Calu3 (cell line): ENCODE measurements at regions of chr5 and their contacts with region 1.

Region 1: DNA sequence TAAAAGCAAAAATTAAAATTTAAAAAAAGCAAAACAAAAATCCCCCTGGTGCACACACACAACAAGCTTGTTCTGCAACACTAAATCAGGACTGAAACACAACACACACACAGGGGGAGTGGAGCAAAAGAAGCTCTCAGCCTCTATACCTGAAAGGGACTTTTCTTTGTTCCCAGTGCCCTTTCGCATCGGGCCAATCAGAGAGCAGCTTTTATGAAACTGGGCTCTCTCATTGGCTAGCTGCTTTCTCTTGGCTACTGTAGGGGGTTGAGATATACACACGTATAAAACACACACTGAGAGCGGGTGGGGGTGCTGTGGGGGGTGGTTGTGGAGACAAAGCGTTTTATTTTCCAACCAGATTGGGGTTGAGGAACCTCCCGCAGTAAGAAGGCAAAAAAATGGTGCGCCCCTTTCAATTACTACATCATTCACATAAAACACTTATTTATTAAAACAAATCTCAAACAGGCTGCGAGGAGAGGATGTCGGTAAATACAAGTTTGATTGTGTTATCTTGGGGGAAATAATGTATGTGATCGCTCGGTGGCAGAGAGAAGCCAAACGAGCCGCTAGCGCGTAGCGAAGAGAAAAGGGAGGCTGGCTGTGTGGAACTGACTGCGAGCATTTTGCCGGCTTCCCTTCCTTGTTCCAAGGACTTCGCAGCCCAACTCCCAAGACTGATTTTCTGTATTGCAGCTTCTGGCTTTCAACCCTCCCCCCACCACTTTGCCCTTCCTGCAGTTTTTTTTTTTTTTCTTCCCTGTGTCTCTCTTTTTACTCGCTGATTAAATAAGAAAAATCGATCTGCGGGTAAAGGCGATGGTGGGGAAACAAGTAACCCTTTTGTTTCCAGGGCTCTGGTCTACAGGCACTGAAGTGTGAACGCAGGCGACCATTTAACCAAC is 2.5 kb upstream of the ZNF608 start:
- DNase-seq: peak; percentile 83
- H3K4me3 Mint-ChIP-seq: peak overlapping the region; percentile 80
- H3K27ac Mint-ChIP-seq: peak overlapping the region; percentile 96
- H3K4me1 Mint-ChIP-seq: peaks cover 26% of the 10 kb centered on the region
- H3K27me3 Mint-ChIP-seq: no peaks in the 10 kb centered on the region
- CTCF ChIP-seq: no peak

Region 2: DNA sequence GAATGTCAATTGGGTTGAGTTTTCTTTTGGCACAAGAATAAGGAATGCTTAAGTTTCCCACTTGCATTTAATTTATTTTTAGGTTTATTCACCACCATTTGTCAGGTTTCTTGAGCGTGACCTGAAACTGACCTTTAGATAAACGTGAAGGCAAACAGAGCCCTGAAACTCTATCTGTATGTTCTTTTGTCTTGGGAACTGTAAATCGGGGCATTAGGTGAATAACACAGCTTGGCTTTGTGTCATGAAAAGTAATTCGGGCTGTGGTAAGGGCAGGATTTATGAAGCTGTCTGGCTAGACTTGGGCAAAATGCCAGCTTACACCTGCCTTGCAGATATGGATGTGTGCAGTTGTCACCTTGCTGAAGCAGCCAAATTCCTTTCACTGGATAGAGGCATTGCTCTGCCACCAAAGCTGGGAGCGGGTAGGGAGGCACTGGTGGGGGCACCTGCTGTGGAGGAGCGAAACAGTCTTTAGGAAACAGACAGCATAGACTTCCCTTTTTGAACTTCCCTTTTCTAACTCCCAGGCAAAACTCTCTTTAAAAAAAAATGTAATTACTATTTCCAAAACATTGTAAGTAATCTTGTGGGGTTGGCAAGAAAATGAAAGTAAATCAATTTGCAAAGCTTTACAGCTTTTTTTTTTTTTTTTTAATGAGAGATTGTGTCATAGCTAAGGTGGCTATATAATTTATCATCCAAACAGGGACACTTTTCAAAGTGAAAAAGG is 691.8 kb before region 1 on chr5:
- CTCF ChIA-PET with region 1: no interaction called
- intact Hi-C with region 1: loop called (anchors 5 kb)
- DNase-seq: peak; percentile 77
- H3K4me3 Mint-ChIP-seq: peak overlapping the region; percentile 64
- H3K27ac Mint-ChIP-seq: peak overlapping the region; percentile 81
- H3K4me1 Mint-ChIP-seq: peaks cover 42% of the 10 kb centered on the region
- H3K27me3 Mint-ChIP-seq: no peaks in the 10 kb centered on the region
- CTCF ChIP-seq: no peak

Region 3: GRCh38 chr5:124764992-124765611 is 16.2 kb after region 1 on chr5:
- CTCF ChIA-PET with region 1: no interaction called
- intact Hi-C with region 1: no loop called
- DNase-seq: no peak
- H3K4me3 Mint-ChIP-seq: no peak overlapping the region
- H3K27ac Mint-ChIP-seq: no peak overlapping the region
- H3K4me1 Mint-ChIP-seq: no peaks in the 10 kb centered on the region
- H3K27me3 Mint-ChIP-seq: no peaks in the 10 kb centered on the region
- CTCF ChIP-seq: no peak

Region 4: GRCh38 chr5:124790895-124791732 is 42.2 kb after region 1 on chr5:
- CTCF ChIA-PET with region 1: interaction called, 9 read pairs
- intact Hi-C with region 1: loop called (anchors 2 kb)
- DNase-seq: no peak
- H3K4me3 Mint-ChIP-seq: no peak overlapping the region
- H3K27ac Mint-ChIP-seq: peak overlapping the region; percentile 80
- H3K4me1 Mint-ChIP-seq: peaks cover 32% of the 10 kb centered on the region
- H3K27me3 Mint-ChIP-seq: no peaks in the 10 kb centered on the region
- CTCF ChIP-seq: no peak

Region 5: GRCh38 chr5:125011014-125011413 is 262.1 kb after region 1 on chr5:
- CTCF ChIA-PET with region 1: no interaction called
- intact Hi-C with region 1: loop called (anchors 10 kb)
- DNase-seq: no peak
- H3K4me3 Mint-ChIP-seq: no peak overlapping the region
- H3K27ac Mint-ChIP-seq: no peak overlapping the region
- H3K4me1 Mint-ChIP-seq: peaks cover 27% of the 10 kb centered on the region
- H3K27me3 Mint-ChIP-seq: no peaks in the 10 kb centered on the region
- CTCF ChIP-seq: no peak

Region 6: GRCh38 chr5:125277494-125278154 is 528.7 kb after region 1 on chr5:
- CTCF ChIA-PET with region 1: no interaction called
- intact Hi-C with region 1: loop called (anchors 10 kb)
- DNase-seq: peak; percentile 50
- H3K4me3 Mint-ChIP-seq: no peak overlapping the region
- H3K27ac Mint-ChIP-seq: peak overlapping the region; percentile 61
- H3K4me1 Mint-ChIP-seq: peaks cover 40% of the 10 kb centered on the region
- H3K27me3 Mint-ChIP-seq: no peaks in the 10 kb centered on the region
- CTCF ChIP-seq: no peak

Region 7: DNA sequence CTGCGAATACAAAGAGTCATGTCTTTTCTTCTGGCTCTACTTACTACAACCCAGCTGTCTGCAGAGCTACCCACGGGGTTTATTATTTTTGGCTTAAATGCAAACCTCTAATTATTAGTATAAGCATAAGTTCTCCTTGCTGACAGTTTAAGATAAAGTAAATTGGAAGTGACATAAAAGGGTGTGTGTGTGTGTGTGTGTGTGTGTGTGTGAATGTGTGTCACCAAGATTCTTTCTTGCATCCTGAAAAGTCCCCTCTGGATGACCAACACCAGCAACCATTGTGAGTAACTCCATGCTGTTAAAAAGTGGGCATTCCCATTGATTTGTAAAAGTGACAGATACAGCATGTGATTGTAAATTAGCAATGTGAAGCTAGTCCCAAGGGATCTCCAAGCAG is 801.3 kb after region 1 on chr5:
- CTCF ChIA-PET with region 1: no interaction called
- intact Hi-C with region 1: no loop called
- DNase-seq: no peak
- H3K4me3 Mint-ChIP-seq: no peak overlapping the region
- H3K27ac Mint-ChIP-seq: no peak overlapping the region
- H3K4me1 Mint-ChIP-seq: peaks cover 12% of the 10 kb centered on the region
- H3K27me3 Mint-ChIP-seq: no peaks in the 10 kb centered on the region
- CTCF ChIP-seq: no peak

Region 8: GRCh38 chr5:125835293-125836172 is 1086.6 kb after region 1 on chr5:
- CTCF ChIA-PET with region 1: interaction called, 9 read pairs
- intact Hi-C with region 1: loop called (anchors 10 kb)
- DNase-seq: peak; percentile 62
- H3K4me3 Mint-ChIP-seq: no peak overlapping the region
- H3K27ac Mint-ChIP-seq: no peak overlapping the region
- H3K4me1 Mint-ChIP-seq: peaks cover 9% of the 10 kb centered on the region
- H3K27me3 Mint-ChIP-seq: no peaks in the 10 kb centered on the region
- CTCF ChIP-seq: peak; percentile 73